Activated naive CD8-positive, alpha-beta T cell treated with anti-CD3 and anti-CD28 coated beads, Interleukin-2, amount 10 ng/mL, durations not matched to agents 7 days and 5 days (primary cell): ENCODE measurements at regions of chr15 and their contacts with region 1.

Region 1: DNA sequence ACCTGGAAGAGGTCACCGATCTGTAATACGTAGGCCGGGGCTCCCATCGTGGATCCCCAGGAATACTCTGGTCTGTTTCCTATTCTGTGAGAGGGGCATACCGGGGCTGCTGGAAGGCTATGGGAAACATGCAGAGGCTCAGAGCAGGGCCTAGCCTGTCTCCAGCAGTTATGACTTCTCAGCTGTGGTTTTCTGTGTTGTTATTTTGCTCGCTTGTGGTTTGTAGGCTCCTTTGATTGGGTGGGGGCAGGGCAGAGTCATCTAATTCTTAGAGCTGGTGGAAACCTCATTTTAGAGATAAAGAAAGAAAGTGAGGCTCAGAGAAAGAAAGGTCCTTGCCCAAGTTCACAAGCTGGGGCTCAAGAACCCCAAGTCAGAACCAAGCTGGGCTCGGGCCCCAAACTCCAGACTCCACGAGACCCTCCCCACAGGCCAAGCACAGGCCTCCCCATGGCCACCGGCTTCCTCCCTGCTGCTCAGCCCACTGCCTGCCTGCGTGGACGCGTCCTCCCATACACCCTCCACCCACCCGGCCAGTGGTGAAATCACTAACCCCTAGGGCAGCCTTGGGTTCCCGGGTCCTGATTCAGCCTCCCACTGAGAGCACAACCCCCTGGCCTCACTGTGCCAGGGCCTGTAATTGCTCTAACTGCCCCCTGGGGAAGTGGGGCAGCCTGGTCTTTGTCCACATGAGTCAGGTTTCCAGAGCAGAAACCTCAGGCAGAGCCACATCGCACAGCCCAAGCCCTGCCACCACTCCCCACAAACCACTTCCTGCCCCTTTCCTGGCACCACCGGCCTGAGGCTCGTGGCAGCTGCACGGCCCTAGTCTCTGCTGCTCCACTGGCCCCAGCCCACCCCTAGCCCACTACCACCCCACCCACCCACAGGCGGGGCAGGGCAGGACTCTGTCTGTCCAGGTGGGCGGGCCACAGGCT is 270.8 kb downstream of the UACA start:
- DNase-seq: peak; percentile 86
- ATAC-seq: peak; percentile 65
- H3K4me3 Mint-ChIP-seq: peak overlapping the region; percentile 81
- H3K27ac Mint-ChIP-seq: peak overlapping the region; percentile 92
- H3K4me1 Mint-ChIP-seq: peaks cover 75% of the 10 kb centered on the region
- H3K27me3 Mint-ChIP-seq: peaks cover 46% of the 10 kb centered on the region

Region 2: GRCh38 chr15:70466895-70467529 is 25.5 kb before region 1 on chr15:
- POLR2A ChIA-PET with region 1: no interaction called
- DNase-seq: no peak
- ATAC-seq: peak; percentile 86
- H3K4me3 Mint-ChIP-seq: no peak overlapping the region
- H3K27ac Mint-ChIP-seq: no peak overlapping the region
- H3K4me1 Mint-ChIP-seq: peaks cover 4% of the 10 kb centered on the region
- H3K27me3 Mint-ChIP-seq: peaks cover 51% of the 10 kb centered on the region

Region 3: GRCh38 chr15:70480196-70480856 is 12.2 kb before region 1 on chr15:
- POLR2A ChIA-PET with region 1: interaction called, 12 read pairs
- DNase-seq: peak; percentile 70
- ATAC-seq: peak; percentile 67
- H3K4me3 Mint-ChIP-seq: peak overlapping the region; percentile 59
- H3K27ac Mint-ChIP-seq: peak overlapping the region; percentile 26
- H3K4me1 Mint-ChIP-seq: peaks cover 44% of the 10 kb centered on the region
- H3K27me3 Mint-ChIP-seq: peaks cover 57% of the 10 kb centered on the region

Region 4: GRCh38 chr15:70504299-70504951 is 11.9 kb after region 1 on chr15:
- POLR2A ChIA-PET with region 1: interaction called, 18 read pairs
- DNase-seq: no peak
- ATAC-seq: peak; percentile 36
- H3K4me3 Mint-ChIP-seq: peak overlapping the region; percentile 58
- H3K27ac Mint-ChIP-seq: peak overlapping the region; percentile 47
- H3K4me1 Mint-ChIP-seq: peaks cover 57% of the 10 kb centered on the region
- H3K27me3 Mint-ChIP-seq: peaks cover 9% of the 10 kb centered on the region